Vagina (tissue), 2 donors: ENCODE measurements at regions of chr15 and their contacts with region 1.

Region 1: GRCh38 chr15:92917606-92918407 is 17.7 kb downstream of the CHD2 start:
- DNase-seq: no peak
- H3K4me3 ChIP-seq: peak overlapping the region; percentile 11 to 23
- H3K27ac ChIP-seq: peak overlapping the region; percentile 89
- H3K4me1 ChIP-seq: peaks cover 100% of the 10 kb centered on the region
- H3K27me3 ChIP-seq: no peaks in the 10 kb centered on the region
- CTCF ChIP-seq: peak; percentile 92 to 95 (median 92)
- POLR2A ChIP-seq: no peak

Region 2: DNA sequence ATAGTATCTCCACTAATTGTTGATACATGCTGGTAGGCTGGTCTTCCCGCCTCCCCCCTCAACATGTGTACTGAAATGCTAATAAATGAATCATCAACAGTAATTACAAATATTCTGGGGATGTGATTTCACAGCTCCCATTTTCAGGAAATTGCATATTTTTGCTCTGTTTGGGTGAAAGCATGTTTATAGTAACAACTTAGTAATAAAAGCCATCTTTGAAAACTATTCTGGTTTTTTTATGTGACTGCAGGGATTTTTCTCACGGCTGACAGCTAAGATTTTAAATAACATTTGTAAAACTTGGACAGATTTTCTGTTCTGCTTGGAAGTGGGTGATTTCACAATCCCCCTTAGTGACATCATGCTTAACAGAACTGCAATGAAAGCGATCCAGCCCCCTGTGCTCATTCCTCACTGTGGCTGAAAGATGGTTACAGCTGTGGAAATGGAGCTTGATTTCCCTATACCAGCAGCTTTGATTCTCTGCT is 236.6 kb before region 1 on chr15:
- intact Hi-C with region 1: no loop called
- DNase-seq: peak in 1 of 2 donors; percentile 82
- H3K4me3 ChIP-seq: no peak overlapping the region
- H3K27ac ChIP-seq: peak overlapping the region; percentile 68
- H3K4me1 ChIP-seq: peaks cover 15% of the 10 kb centered on the region
- H3K27me3 ChIP-seq: no peaks in the 10 kb centered on the region
- CTCF ChIP-seq: no peak
- POLR2A ChIP-seq: no peak

Region 3: GRCh38 chr15:92808978-92809879 is 108.6 kb before region 1 on chr15:
- intact Hi-C with region 1: loop called (anchors 5 kb)
- DNase-seq: peak in 1 of 2 donors; percentile 98
- H3K4me3 ChIP-seq: peak overlapping the region; percentile 62 to 70
- H3K27ac ChIP-seq: peak overlapping the region; percentile 99
- H3K4me1 ChIP-seq: peaks cover 42% of the 10 kb centered on the region
- H3K27me3 ChIP-seq: no peaks in the 10 kb centered on the region
- CTCF ChIP-seq: peak; percentile 78 to 98 (median 97)
- POLR2A ChIP-seq: peak in 1 of 2 donors; percentile 34

Region 4: GRCh38 chr15:92989470-92989869 is 71.7 kb after region 1 on chr15:
- intact Hi-C with region 1: no loop called
- DNase-seq: no peak
- H3K4me3 ChIP-seq: no peak overlapping the region
- H3K27ac ChIP-seq: no peak overlapping the region
- H3K4me1 ChIP-seq: no peaks in the 10 kb centered on the region
- H3K27me3 ChIP-seq: no peaks in the 10 kb centered on the region
- CTCF ChIP-seq: no peak
- POLR2A ChIP-seq: no peak

Region 5: DNA sequence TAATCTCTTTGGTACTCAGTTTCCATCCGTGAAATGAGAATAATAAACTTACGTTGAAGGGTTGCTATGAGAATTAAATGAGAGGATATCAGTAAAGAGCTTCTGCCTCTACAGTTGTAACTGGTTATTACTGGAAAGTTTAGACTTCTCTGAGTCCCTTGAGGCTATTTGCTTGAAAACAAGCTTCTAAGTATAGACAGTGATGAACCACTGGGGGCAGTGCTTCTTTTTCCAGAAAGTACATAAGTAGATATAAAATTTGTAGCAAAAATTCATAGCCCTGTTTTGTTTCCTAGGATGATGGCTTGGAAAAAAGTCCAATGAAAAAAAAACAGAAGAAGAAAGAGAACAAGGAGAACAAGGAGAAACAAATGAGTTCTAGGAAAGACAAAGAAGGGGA is 84.1 kb after region 1 on chr15:
- intact Hi-C with region 1: no loop called
- DNase-seq: no peak
- H3K4me3 ChIP-seq: no peak overlapping the region
- H3K27ac ChIP-seq: no peak overlapping the region
- H3K4me1 ChIP-seq: no peaks in the 10 kb centered on the region
- H3K27me3 ChIP-seq: no peaks in the 10 kb centered on the region
- CTCF ChIP-seq: no peak
- POLR2A ChIP-seq: no peak